Gastrocnemius medialis (tissue), 4 donors: ENCODE measurements at regions of chr5 and their contacts with region 1.

Region 1: GRCh38 chr5:175478384-175479124 is at the start of gene SFXN1:
- DNase-seq: peak; percentile 31 to 61
- ATAC-seq: peak; percentile 86 to 90
- H3K4me3 ChIP-seq: peak within 1 kb of the TSS; percentile 74 to 93 (median 84)
- H3K27ac ChIP-seq: peak within 1 kb of the TSS; percentile 53 to 81 (median 76)
- H3K4me1 ChIP-seq: peaks cover 9 to 18% of the 10 kb centered on the region in 2 donors
- H3K27me3 ChIP-seq: no peaks in the 10 kb centered on the region
- CTCF ChIP-seq: no peak
- POLR2A ChIP-seq: peak; percentile 46 to 69
- total RNA-seq, gene SFXN1: 5.8 to 16.7 (median 13.1) TPM

Region 2: DNA sequence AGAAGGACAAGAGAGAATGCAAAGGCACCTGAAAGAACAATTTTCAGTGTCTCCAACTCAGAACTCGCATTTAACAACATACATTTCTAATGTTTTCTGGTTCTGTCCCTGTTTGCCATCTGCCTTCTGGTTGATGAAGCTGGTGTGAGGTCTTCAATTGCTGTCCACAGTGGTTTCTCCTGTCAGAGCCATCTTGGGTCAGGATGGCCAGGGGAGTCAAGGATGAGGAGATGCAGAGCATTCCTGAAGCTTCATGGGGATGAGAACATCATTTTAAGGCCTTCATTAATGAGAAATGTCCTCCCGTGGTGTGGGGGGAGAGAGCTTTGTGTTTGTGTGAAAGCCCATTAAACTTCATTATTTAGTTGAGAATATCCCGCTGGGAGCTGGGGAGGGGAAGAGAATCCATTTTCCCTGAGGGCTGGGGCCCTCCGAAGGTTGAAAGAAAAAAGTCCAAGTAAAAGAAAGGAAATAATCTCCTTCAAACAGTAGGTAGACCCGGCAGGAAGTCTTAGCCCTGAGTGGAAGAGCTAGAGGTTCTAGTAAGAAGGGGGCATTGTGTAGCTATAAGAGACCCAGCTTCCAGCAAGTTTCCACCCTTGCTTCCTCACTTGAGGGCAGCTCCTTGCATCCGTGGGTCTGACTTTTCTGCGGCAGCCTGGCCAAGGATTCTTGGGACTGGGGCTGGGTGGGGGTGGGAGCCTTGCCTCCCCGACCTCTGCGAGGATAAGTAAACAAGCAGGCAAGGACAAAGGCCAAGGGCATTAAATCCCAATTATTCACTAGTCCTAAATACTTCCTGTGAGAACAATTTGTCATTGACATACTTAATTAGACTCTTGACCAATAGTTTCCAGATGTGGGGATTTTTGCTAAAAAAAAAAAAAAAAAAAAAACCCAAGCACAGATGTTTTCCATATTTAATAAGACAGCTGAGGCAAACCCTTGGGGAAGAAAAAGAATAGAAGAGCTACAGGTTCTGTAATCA is 635.0 kb before region 1 on chr5:
- in situ Hi-C with region 1: no loop called
- intact Hi-C with region 1: loop called (anchors 10 kb)
- DNase-seq: no peak
- ATAC-seq: peak in 1 of 2 donors; percentile 57
- H3K4me3 ChIP-seq: no peak overlapping the region
- H3K27ac ChIP-seq: peak overlapping the region in 2 of 4 donors; percentile 10 to 31
- H3K4me1 ChIP-seq: no peaks in the 10 kb centered on the region
- H3K27me3 ChIP-seq: no peaks in the 10 kb centered on the region
- CTCF ChIP-seq: no peak
- POLR2A ChIP-seq: no peak

Region 3: DNA sequence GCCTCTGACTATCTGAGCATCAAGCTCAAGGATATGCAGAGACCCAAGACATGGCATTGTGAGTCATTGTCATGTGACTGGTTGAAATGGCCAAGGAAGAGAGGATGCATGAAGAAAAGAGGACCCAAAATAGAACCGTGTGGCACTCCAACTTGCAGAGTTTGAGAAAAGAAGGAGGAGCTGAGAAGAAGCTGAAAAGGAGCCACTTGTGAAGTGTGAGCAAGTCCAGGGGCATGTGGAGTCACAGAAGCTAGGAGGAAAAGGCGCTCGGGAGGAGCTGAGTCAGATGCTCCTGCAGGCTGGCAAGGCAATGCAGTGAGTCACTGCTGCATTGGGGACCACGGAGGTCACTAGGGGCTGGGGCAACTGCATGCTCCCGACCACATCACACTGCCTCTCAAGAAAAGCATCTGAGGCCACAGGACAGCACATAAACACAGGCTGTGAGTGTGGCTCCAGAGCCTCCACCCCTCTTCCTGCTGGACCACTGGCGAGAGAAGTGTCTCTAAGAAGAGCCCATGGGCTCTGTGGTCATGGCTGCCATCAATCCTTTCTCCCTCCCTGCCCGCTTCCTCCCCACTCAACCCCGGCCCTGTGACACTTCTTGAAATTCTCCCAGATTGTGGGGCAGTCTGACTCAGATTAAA is 232.2 kb before region 1 on chr5:
- in situ Hi-C with region 1: no loop called
- intact Hi-C with region 1: no loop called
- DNase-seq: no peak
- ATAC-seq: no peak
- H3K4me3 ChIP-seq: no peak overlapping the region
- H3K27ac ChIP-seq: no peak overlapping the region
- H3K4me1 ChIP-seq: no peaks in the 10 kb centered on the region
- H3K27me3 ChIP-seq: no peaks in the 10 kb centered on the region
- CTCF ChIP-seq: no peak
- POLR2A ChIP-seq: no peak